Tibial artery (tissue), 4 donors: ENCODE measurements at regions of chr4 and their contacts with region 1.

Region 1: DNA sequence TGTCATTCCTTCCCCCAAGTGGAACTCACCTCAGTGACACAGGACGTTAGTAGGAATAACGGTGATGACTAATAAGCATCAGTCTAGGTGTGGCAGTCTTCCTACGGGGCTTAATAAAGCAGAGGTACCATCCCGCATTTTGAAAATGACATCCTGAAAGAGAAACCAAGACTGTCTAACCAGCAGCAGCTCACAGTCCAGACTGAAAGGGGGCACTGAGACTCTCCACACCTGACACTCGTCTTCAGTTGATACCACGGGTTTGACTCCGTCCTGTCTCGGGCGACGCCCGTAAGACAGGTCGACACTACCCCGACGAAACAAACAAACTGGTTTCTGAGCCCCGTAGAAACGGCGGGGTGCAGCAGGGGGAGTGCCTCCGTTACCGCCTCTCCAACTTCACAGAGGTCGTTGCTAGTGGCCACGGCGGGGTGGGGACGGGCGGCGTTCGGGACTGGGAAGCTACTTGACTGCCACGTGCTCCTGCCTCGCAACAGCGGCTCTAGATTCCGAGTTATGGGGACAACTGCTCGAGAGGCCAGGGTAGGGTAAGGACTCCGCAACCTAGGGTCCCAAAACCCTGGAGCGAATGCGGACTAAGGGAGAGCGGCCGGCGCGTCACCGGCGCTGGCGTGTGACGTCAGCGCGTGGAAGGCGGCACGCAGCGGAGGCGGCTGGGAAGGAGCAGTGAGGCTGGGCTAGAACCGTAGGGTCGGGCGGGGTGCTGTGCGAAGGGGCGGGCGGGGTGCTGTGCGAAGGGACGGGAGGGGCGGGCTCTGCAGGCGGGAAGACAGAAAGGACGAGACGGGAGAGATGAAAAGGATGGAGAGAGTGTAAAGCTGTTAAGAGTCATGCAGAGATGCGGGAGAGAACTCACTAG is at the start of gene NEK1:
- DNase-seq: peak; percentile 84 to 91
- H3K4me3 ChIP-seq: peak within 1 kb of the TSS; percentile 79 to 98
- H3K27ac ChIP-seq: peak within 1 kb of the TSS; percentile 92 to 98
- H3K4me1 ChIP-seq: peaks cover 0 to 22% (median 13%) of the 10 kb centered on the region in 4 donors
- H3K27me3 ChIP-seq: no peaks in the 10 kb centered on the region
- CTCF ChIP-seq: no peak

Region 2: DNA sequence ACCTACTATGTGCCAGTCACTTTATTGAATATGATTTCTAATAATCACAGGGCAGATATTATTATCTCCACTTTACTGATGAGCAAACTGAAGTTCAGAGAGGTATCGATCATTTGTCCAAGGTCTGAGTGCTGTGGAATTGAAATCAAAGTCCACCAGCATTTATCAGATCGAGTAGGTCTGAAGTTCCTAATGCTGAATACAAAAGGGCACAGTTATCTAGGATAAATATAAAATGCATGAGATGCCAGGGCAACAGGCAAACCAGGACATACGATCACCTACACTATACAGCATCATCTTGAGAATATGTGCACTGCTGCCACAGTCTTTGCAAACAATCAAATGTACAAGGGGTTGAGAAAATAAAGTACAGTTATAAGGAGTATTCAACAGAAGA is 284.3 kb before region 1 on chr4:
- intact Hi-C with region 1: no loop called
- DNase-seq: no peak
- H3K4me3 ChIP-seq: no peak overlapping the region
- H3K27ac ChIP-seq: no peak overlapping the region
- H3K4me1 ChIP-seq: no peaks in the 10 kb centered on the region
- H3K27me3 ChIP-seq: no peaks in the 10 kb centered on the region
- CTCF ChIP-seq: no peak

Region 3: GRCh38 chr4:169625886-169626285 is 13.7 kb after region 1 on chr4:
- intact Hi-C with region 1: loop called (anchors 2 kb)
- DNase-seq: no peak
- H3K4me3 ChIP-seq: no peak overlapping the region
- H3K27ac ChIP-seq: no peak overlapping the region
- H3K4me1 ChIP-seq: peaks cover 0 to 19% (median 13%) of the 10 kb centered on the region in 4 donors
- H3K27me3 ChIP-seq: no peaks in the 10 kb centered on the region
- CTCF ChIP-seq: no peak

Region 4: DNA sequence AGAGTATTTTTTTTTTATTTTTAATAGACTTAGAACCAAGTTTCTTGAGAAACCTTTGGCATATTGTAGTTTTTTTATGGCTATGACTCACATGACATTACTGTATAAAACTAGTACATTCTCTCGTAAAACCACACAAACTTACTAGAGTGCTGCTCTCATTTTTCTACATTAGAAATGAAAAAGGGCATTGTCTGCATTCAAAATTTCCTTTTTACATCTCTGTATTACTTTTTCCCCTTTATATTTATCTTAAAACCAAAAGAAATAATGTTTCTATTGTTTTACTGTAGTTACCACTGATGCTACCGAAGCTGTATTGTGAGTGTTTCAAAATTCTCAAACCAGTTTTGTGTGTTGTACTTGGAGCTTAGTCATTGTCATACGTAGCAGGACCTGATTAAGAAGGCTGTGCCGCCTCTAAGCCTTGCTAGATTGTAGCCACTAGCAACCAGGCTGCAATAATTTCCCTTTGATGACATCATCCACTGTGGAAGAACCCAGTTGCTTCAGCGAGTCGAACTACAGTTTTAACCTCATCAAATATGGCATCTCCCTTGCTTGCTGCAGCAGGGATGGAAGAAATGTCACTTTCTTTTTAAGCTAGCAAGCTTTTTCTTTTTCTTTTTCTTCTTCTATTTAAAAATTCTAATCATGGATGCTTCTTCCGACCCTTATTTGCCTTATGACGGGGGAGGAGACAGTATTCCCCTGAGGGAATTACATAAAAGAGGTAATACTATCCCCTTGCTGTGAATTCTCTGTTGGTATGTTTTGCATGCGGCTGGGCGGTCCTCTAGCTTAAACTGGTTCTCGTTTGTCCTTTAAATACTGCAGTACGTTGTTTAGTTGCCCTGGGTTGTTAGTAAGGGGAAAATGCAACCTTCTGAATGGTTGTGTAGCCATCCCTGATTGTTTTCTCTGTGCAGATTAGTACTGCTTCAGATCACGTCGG is 47.8 kb after region 1 on chr4:
- intact Hi-C with region 1: no loop called
- DNase-seq: peak; percentile 82 to 84
- H3K4me3 ChIP-seq: peak overlapping the region; percentile 52 to 57
- H3K27ac ChIP-seq: peak overlapping the region; percentile 54 to 74
- H3K4me1 ChIP-seq: peaks cover 0 to 26% (median 11%) of the 10 kb centered on the region in 4 donors
- H3K27me3 ChIP-seq: no peaks in the 10 kb centered on the region
- CTCF ChIP-seq: no peak